ENCODE measurements at regions of chr9 and their contacts with region 1.

Region 1: GRCh38 chr9:37528652-37529510 is 43.1 kb downstream of the POLR1E start:
- DNase-seq: peak; percentile 93
- H3K4me3 Mint-ChIP-seq: peak overlapping the region; percentile 71
- H3K27ac Mint-ChIP-seq: peak overlapping the region; percentile 94
- H3K4me1 Mint-ChIP-seq: peaks cover 42% of the 10 kb centered on the region
- H3K27me3 Mint-ChIP-seq: no peaks in the 10 kb centered on the region

Region 2: DNA sequence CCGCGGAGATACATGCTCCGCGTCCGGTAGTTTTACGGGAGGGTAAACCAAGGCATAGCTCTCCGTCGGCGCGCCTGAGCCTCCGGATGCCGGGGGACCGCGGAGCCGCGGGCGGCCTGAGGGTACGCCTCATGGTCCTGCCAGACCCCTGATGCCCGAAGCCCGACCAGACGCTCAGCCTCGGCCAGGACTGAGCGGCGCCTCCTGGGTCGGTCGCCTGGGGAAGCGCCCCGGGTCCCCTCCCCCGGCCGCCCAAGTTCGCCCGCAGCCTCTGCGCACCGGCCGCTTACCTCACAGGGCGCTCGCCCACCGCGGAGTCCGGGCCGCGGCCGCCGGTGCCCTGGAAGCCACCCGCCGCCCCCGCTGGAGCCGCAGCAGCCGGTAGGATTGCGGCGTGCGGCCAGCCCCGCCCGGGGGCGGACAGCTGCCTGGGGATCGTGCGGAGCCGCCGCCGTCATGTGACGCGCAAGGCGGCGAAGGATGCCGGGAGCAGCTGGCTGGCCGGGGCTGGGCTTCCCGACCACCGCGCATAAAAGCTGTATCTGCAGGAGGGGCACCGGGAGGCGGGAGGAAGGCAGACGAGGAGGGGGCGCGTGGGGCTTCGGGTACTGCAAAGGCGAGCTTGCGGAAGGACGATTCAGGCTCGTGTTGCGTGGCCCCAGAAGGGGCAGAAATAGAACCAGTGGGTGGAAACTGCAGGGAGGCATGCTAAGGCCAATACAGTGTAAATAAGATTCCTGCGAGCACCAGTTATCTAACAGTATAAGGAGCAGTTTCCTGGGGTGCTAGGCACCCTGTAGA is 47.2 kb after region 1 on chr9 and contains the start of gene FBXO10:
- CTCF ChIA-PET with region 1: no interaction called
- POLR2A ChIA-PET with region 1: interaction called, 3 read pairs
- intact Hi-C with region 1: loop called (anchors 5 kb)
- DNase-seq: peak; percentile 64
- H3K4me3 Mint-ChIP-seq: peak within 1 kb of the TSS; percentile 79
- H3K27ac Mint-ChIP-seq: no peak within 1 kb of the TSS
- H3K4me1 Mint-ChIP-seq: peaks cover 16% of the 10 kb centered on the region
- H3K27me3 Mint-ChIP-seq: no peaks in the 10 kb centered on the region
- total RNA-seq, gene FBXO10: 3.6 to 3.9 TPM

Measured in activated CD4-positive, alpha-beta memory T cell treated with anti-CD3 and anti-CD28 coated beads for 36 hours (primary cell).